ENCODE measurements at regions of chr19 and their contacts with region 1.

Region 1: DNA sequence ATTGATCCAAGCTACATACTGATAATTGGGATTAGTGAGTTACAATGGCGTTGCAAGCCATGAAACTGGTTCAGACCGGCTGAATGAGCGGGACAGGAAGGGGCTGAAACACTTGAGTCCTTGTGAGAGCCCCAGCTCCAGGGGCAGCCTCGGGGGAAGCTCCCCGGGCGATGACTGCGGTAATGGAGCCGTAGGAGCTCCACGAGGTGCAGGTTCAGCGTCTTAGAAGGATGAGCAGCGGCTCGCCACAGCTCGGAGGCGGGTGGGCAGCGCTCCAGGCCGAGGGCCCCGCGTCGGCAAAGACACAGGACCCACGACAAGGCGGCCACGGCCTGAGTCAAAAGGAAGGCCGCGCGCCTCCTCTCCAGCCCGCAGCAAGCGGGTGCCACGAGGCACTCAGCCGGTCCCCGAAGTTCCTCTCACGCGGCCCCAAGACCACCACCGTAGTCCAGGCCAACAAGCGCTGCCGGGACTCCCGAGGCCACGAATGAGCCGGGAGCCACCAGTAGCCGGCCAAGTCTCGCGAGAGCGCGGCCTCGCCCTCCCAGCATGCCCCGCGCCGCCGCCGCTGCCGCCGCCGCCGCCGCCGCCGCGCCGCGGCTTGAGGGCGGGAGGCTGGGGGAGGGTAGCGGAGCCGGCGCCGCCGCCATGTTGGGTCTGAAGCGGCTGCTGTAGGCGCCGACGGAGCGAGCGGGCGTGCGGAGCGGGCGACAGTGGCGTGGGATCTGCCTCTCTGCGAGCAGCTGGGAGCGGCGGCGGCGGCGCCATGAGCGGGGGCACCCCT is at the start of gene LSM14A:
- DNase-seq: peak; percentile 94 to 97 (median 94)
- ATAC-seq: peak; percentile 88 to 95 (median 92)
- H3K4me3 ChIP-seq: peak within 1 kb of the TSS; percentile 78 to 99 (median 93)
- H3K27ac ChIP-seq: peak within 1 kb of the TSS; percentile 97 to 100 (median 98)
- H3K4me1 ChIP-seq: peaks cover 23 to 50% (median 40%) of the 10 kb centered on the region in 12 donors
- H3K27me3 ChIP-seq: no peaks in the 10 kb centered on the region
- CTCF ChIP-seq: peak in 1 of 12 donors; percentile 7
- POLR2A ChIP-seq: peak in 1 of 2 donors; percentile 63
- total RNA-seq, gene LSM14A: 39.8 to 86.8 (median 70.5) TPM

Region 2: DNA sequence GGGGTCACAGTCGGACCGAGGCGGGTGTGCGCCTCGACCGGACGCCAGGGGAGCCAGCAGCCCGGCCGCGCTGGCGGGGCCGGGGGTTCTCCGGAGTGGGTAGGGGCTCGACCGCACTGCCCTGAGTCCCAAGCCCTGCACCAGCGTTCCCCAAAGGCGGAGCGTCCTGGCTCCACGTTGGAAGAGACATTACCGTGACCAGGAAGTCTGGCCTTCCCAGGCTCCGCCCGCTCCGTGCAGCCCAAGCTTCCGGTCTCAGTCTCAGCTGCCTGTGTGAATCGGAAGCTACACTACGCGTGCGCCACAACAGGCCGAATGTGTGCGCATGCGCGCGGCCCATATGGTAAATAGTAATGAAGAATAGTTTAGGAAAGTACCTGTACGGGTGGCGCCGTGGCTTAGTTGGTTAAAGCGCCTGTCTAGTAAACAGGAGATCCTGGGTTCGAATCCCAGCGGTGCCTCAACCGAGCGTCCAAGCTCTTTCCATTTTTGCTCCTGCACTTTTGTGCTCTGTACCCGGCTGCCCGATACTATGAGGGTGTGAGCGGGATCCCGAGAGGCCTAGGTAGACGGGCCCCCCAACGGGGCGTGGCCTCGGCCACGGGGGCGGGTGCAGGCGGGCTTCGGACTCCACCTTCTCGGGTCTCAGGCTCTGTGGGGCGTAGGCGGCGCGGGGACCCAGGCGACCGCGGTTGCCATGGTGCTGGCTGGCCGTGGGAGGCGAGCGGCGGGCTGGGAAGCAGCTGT is 995.2 kb before region 1 on chr19:
- intact Hi-C with region 1: loop called in 1 of 10 experiments (anchors 5 kb)
- DNase-seq: peak; percentile 94 to 97 (median 97)
- ATAC-seq: peak; percentile 94 to 96 (median 95)
- H3K4me3 ChIP-seq: peak overlapping the region; percentile 64 to 99 (median 88)
- H3K27ac ChIP-seq: peak overlapping the region; percentile 85 to 98 (median 94)
- H3K4me1 ChIP-seq: peaks cover 0 to 32% (median 21%) of the 10 kb centered on the region in 12 donors
- H3K27me3 ChIP-seq: no peaks in the 10 kb centered on the region
- CTCF ChIP-seq: peak in 3 of 12 donors; percentile 10 to 39 (median 19)
- POLR2A ChIP-seq: peak in 1 of 2 donors; percentile 78

Region 3: DNA sequence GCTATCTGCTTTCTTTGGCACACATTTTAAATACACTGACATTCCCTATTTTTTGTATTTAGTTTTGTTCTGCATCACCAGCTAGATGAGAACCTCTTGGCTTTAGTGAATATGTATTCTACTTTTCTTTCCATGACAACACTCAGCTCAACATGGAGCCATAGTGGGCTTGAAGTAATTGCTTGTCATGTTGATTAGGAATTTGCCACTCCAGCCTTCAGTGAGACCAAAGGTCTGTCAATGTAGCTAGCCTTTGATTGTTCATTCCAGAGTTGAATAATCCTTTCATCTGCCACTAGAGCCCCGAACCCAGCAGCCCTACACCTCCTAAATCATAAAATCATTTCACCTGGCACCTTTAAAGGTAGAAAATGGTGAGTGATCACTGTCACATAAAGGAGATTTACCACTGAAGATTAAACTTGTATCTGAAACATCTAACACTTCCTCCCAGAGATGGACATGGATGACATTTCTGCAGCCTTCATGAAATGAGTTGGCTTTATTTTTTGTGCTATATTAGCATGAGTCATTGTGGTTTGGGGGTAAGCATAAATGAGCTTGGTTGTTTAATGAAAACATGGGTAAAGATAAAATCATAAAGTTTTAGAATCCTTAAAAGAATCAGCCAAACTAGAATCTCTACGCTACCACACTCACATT is 53.1 kb after region 1 on chr19:
- intact Hi-C with region 1: no loop called
- DNase-seq: no peak
- ATAC-seq: no peak
- H3K4me3 ChIP-seq: no peak overlapping the region
- H3K27ac ChIP-seq: no peak overlapping the region
- H3K4me1 ChIP-seq: peaks cover 0 to 16% (median 0%) of the 10 kb centered on the region in 12 donors
- H3K27me3 ChIP-seq: no peaks in the 10 kb centered on the region
- CTCF ChIP-seq: no peak
- POLR2A ChIP-seq: no peak

Measured in heart left ventricle (tissue), 16 donors.